IMR-90 (cell line): ENCODE measurements at regions of chr20 and their contacts with region 1.

Region 1: GRCh38 chr20:8853805-8854338 is 215.0 kb upstream of the PLCB4 start:
- DNase-seq: peak; percentile 84
- ATAC-seq: peak; percentile 82
- H3K4me3 ChIP-seq: peak overlapping the region; percentile 2; the same call in 1 of the 2 replicates
- H3K27ac ChIP-seq: peak overlapping the region; percentile 88
- H3K4me1 ChIP-seq: peaks cover 15% of the 10 kb centered on the region
- H3K27me3 ChIP-seq: no peaks in the 10 kb centered on the region
- CTCF ChIP-seq: peak; percentile 87
- POLR2A ChIP-seq: 0 out of 2 replicates have a peak, but pooled peaks have one; percentile 36
- RAD21 ChIP-seq: peak; percentile 90

Region 2: GRCh38 chr20:8756410-8756809 is 97.5 kb before region 1 on chr20:
- CTCF ChIA-PET with region 1: no interaction called
- POLR2A ChIA-PET with region 1: no interaction called
- dilution Hi-C with region 1: no loop called
- in situ Hi-C with region 1: no loop called
- intact Hi-C with region 1: loop called (anchors 5 kb)
- DNase-seq: peak; percentile 96
- ATAC-seq: peak; percentile 82
- H3K4me3 ChIP-seq: no peak overlapping the region
- H3K27ac ChIP-seq: no peak overlapping the region
- H3K4me1 ChIP-seq: peaks cover 11% of the 10 kb centered on the region
- H3K27me3 ChIP-seq: no peaks in the 10 kb centered on the region
- CTCF ChIP-seq: no peak
- POLR2A ChIP-seq: no peak
- RAD21 ChIP-seq: no peak

Region 3: DNA sequence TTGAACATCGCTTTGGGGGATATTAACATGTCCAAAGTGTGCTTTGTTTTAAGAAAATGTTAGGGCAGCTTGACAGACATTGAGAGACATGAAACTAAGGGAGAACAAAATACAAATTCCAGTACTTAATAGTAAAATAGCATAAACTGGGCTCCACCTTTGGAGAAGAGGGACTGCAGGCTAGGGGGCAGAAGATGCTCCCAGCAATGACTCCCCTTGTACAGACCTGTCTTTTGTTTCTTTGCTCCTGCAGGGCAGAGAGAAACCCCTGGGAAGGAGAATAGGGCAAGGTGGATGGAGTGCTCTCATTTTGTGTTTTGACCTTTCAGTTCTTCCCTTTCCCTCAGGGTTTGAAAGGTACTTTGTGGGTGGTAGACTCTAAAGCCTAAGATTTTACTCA is 99.4 kb after region 1 on chr20:
- CTCF ChIA-PET with region 1: no interaction called
- POLR2A ChIA-PET with region 1: interaction called, 17 read pairs
- dilution Hi-C with region 1: no loop called
- in situ Hi-C with region 1: no loop called
- intact Hi-C with region 1: no loop called
- DNase-seq: no peak
- ATAC-seq: no peak
- H3K4me3 ChIP-seq: no peak overlapping the region
- H3K27ac ChIP-seq: no peak overlapping the region
- H3K4me1 ChIP-seq: no peaks in the 10 kb centered on the region
- H3K27me3 ChIP-seq: no peaks in the 10 kb centered on the region
- CTCF ChIP-seq: no peak
- POLR2A ChIP-seq: no peak
- RAD21 ChIP-seq: no peak

Region 4: DNA sequence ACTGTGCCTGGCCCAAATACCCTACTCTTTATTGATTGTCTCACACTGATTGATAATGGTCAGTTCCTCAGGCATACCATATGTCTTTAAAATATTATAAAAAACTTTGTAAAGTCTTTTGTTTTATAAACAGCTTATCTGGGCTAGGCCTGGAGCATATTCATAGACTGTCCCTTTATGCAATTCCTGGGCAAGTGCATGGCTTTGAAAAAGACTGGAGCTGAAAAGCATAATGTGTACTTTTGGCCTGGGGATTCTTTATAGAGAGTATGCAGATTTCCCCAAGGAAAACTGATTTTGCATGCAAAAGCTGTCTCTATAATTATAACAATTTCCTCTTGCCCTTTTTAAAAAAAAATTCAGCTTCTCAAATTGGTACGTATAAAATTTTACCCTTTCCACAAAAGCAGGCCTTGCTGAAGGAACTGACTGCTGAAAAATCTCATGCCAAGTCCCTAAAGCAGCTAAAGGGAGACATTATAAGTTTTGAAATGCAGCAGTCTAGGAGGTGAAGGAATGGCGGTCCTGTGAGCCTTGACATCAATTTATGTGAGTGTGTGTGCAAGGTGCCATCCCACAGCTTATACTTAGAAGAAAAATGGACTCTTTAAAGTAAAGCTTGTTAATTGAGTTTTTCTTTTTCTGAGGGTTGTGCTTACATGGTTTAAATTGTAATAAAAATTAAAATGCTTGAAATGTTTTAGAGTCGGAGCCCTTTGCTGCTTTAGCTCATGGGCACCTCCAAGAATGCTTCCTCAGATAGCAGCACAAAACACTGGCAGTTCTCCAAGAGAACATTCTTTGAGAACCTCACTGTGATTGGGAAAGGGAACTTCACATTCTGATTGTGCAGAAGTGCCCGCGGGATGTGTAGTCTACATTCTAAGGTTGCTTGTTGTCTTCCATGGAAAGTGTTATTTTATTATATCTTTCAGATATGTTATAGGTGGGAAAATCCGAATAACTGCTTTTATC is 259.0 kb after region 1 on chr20:
- CTCF ChIA-PET with region 1: no interaction called
- POLR2A ChIA-PET with region 1: no interaction called
- dilution Hi-C with region 1: no loop called
- in situ Hi-C with region 1: no loop called
- intact Hi-C with region 1: loop called (anchors 5 kb)
- DNase-seq: peak; percentile 78
- ATAC-seq: peak; percentile 71
- H3K4me3 ChIP-seq: no peak overlapping the region
- H3K27ac ChIP-seq: no peak overlapping the region
- H3K4me1 ChIP-seq: peaks cover 16% of the 10 kb centered on the region
- H3K27me3 ChIP-seq: no peaks in the 10 kb centered on the region
- CTCF ChIP-seq: no peak
- POLR2A ChIP-seq: no peak
- RAD21 ChIP-seq: no peak

Region 5: DNA sequence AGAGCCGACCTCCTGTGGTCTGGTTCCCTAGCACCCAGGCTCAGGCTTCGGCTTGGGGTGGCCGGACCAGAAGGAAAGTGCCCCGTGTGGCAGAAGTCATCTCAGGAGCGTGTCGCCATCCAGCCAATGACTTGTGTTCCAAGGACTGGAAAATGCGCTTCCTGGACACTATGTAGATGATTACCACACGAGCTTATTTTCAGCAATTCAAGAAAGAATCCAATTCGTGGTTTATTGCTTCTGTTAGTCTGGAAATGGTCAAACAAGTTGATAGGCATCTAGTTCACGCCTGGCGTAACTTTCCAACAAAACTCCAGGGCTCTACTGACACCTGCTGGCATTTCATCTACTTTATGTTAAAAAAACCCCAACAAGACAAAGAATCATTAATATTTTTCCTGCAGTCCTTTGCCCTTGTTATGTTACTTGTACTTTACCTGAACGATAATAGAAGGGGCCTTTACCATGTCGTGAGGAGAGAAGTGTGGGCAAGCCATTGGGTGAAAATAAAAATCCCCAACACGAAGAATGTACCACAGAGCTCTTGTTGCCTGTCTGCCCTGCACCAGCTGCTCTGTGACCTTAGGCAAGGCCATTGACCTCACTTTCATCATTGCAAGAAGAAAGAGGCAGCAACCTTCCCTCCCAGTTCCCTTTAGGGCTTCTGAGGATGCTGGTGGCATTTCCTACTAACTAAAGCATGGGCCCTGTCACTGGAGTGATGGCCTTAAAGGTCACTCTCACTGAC is 505.9 kb after region 1 on chr20:
- CTCF ChIA-PET with region 1: interaction called, 3 read pairs
- POLR2A ChIA-PET with region 1: no interaction called
- dilution Hi-C with region 1: no loop called
- in situ Hi-C with region 1: loop called (anchors 10 kb)
- intact Hi-C with region 1: loop called (anchors 2 kb)
- DNase-seq: peak; percentile 70
- ATAC-seq: peak; percentile 54
- H3K4me3 ChIP-seq: no peak overlapping the region
- H3K27ac ChIP-seq: no peak overlapping the region
- H3K4me1 ChIP-seq: peaks cover 5% of the 10 kb centered on the region
- H3K27me3 ChIP-seq: no peaks in the 10 kb centered on the region
- CTCF ChIP-seq: peak; percentile 61
- POLR2A ChIP-seq: no peak
- RAD21 ChIP-seq: peak; percentile 77